H1 (cell line): ENCODE measurements at regions of chr1 and their contacts with region 1.

Region 1: DNA sequence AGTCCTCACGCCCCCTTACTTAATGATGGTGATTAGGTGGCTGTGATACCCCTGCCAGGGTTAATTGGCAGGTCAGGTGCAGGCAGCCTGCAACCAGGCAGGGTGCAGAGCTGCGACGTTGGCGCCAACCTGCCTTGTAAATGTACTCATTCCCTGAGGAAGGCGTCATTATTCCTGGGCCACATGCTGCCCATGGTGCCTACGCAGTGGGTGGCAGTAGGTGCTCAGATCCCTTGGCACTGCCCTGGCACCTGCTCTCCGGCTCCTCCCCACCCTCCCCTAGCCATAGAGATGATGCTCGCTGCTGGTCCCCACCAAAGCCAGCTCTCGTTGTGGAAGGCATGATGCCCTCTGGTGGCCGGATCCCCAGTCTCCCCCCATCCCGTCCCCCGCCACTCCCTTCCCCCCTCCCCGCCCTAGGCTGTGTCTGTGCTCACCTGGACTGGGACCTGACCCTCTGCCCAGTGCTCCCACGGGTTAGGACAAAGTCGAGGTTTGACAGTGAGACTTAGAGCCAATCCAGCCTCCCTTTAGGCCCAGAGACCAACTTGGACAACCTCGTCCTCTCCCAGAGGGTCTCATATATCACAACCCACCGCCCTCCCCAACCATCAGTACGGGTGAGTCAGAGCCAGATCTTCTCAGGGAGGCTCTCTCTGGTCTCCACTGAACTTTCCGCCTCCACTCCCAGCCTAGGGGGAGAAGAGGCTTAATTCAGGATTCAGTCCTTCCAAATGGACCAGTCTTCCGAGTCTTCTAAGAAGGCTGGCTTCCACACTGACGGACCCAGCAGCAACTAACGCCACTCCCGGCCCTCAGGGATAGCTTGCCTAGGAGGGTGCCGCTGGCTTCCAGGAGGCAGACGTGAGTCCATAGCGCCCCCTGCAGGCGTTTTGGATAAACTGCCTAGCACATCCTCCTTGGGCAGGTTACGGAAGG is 5.7 kb downstream of the KRTCAP2 start:
- DNase-seq: peak in 1 of 2 experiments; percentile 96
- H3K4me3 ChIP-seq: peak overlapping the region; percentile 30 to 75 (median 72); a peak in 7 of 8 replicates
- H3K27ac ChIP-seq: no peak overlapping the region
- H3K4me1 ChIP-seq: peaks cover 5 to 19% (median 13%) of the 10 kb centered on the region in 4 experiments
- H3K27me3 ChIP-seq: no peaks in the 10 kb centered on the region
- CTCF ChIP-seq: peak in 2 of 3 experiments; percentile 98 to 99; a peak in 3 of 4 replicates
- EP300 ChIP-seq: no peak
- POLR2A ChIP-seq: no peak
- RAD21 ChIP-seq: peak; percentile 96 to 98

Region 2: DNA sequence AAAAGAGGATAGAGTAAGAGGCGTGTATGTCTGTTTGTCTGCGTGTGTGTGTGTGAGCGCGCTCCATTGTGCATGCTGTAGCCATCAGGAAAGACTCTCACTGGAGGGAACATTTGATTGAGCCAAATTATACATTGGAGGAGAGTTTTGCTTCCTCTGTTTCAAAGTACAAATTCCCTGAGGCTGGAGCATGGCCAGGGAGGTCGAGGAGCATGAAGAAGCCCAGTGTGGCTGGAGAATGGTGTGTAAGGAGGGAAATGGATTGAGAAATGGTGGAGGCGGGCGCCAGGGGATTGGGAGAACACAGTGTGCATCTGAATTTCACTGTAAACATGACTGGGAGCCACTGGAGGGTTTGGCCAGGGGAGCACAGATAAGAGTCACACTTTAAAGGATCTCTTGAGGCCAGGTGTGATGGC is 61.8 kb before region 1 on chr1:
- CTCF ChIA-PET with region 1: interaction called, 101 read pairs
- POLR2A ChIA-PET with region 1: no interaction called
- DNase-seq: no peak
- H3K4me3 ChIP-seq: no peak overlapping the region
- H3K27ac ChIP-seq: no peak overlapping the region
- H3K4me1 ChIP-seq: no peaks in the 10 kb centered on the region
- H3K27me3 ChIP-seq: no peaks in the 10 kb centered on the region
- CTCF ChIP-seq: no peak
- EP300 ChIP-seq: no peak
- POLR2A ChIP-seq: no peak
- RAD21 ChIP-seq: no peak

Region 3: GRCh38 chr1:155117617-155118016 is 49.8 kb before region 1 on chr1:
- CTCF ChIA-PET with region 1: interaction called, 66 read pairs
- POLR2A ChIA-PET with region 1: interaction called, 3 read pairs
- DNase-seq: no peak
- H3K4me3 ChIP-seq: no peak overlapping the region
- H3K27ac ChIP-seq: no peak overlapping the region
- H3K4me1 ChIP-seq: no peaks in the 10 kb centered on the region
- H3K27me3 ChIP-seq: peaks cover 0 to 3% (median 0%) of the 10 kb centered on the region in 4 experiments; a peak in 1 of 7 replicates
- CTCF ChIP-seq: no peak
- EP300 ChIP-seq: no peak
- POLR2A ChIP-seq: no peak
- RAD21 ChIP-seq: no peak

Region 4: GRCh38 chr1:155127105-155127964 is 40.1 kb before region 1 on chr1 and contains the start of gene EFNA1:
- CTCF ChIA-PET with region 1: interaction called, 187 read pairs
- POLR2A ChIA-PET with region 1: interaction called, 24 read pairs
- DNase-seq: peak in 1 of 2 experiments; percentile 63
- H3K4me3 ChIP-seq: peak within 1 kb of the TSS; percentile 45 to 71 (median 64)
- H3K27ac ChIP-seq: no peak within 1 kb of the TSS
- H3K4me1 ChIP-seq: peaks cover 16 to 58% (median 40%) of the 10 kb centered on the region in 4 experiments
- H3K27me3 ChIP-seq: peaks cover 33 to 50% (median 45%) of the 10 kb centered on the region in 4 experiments
- CTCF ChIP-seq: no peak
- EP300 ChIP-seq: no peak
- POLR2A ChIP-seq: no peak
- RAD21 ChIP-seq: no peak
- total RNA-seq, gene EFNA1: 4.0 and 4.9 TPM in 2 replicates

Region 5: DNA sequence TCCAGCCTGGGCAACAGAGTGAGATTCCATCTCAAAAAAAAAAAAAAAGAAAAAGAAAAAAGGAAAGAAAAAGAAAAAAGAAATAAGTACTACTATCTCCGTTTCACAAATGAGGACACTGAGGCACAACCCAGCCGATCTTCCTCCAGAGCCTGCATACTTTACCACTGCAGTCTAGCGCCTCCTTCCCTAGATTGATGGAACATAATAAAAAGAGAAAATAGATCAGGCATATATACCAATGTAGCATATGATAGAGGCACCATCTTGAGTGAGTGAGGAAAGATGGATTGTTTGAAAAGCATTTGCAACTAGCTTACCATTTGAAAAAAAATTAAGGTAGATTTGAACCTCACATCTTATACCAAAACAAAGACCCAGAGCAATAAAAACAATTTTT is 21.9 kb before region 1 on chr1:
- CTCF ChIA-PET with region 1: interaction called, 187 read pairs
- POLR2A ChIA-PET with region 1: interaction called, 8 read pairs
- DNase-seq: no peak
- H3K4me3 ChIP-seq: no peak overlapping the region
- H3K27ac ChIP-seq: no peak overlapping the region
- H3K4me1 ChIP-seq: no peaks in the 10 kb centered on the region
- H3K27me3 ChIP-seq: peaks cover 0 to 3% (median 0%) of the 10 kb centered on the region in 4 experiments; a peak in 2 of 7 replicates
- CTCF ChIP-seq: peak in 2 of 3 experiments; percentile 24 to 30; a peak in 2 of 4 replicates
- EP300 ChIP-seq: no peak
- POLR2A ChIP-seq: no peak
- RAD21 ChIP-seq: peak in 1 of 2 experiments; percentile 22; a peak in 2 of 4 replicates

Region 6: DNA sequence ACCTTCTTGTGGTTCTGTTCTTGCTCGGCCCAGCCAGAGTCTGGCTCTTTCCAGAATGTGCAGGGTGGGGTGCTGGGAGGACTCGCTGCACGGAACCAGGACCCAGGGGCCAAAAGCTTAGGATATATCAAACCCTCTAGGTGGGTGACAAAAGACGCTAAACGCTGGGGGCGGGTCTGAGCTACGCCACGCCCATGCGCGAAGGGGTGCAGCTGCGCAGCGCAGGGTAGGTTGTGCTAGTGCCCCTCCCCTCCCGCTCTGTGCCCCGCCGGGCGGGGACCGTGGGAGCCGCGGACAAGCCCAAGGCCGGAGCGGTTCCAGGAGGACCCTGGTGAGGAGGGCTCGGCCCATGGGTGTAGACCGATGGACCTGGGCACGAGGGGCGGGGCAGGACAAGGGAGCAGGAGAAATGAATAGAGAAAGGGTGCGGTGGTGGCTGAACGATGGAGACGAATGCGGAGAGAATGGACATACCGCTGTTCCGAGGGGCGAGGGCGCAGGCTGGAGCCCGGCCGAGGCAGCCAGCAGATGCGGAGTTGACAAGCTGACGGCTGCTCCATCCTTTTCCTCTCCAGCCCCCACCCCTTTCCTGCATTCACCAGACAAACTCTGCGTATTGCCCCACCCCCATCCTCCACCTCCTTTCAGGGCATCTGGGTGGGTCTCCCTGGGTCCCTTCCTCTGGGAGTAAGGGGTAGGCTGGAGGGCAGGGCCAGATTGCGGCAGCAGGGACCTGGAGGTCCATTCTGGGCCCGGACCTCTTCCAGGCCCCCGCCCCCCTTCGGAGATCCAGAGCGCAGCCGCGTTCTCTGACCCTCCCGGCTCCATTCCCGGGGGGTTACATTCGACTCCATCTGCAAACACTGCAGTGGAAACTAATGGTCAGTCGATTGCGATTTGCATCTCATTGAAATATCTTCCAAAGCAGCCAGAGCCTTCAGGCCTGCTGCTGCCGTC is 153.5 kb after region 1 on chr1 and contains the start of gene RUSC1:
- CTCF ChIA-PET with region 1: no interaction called
- POLR2A ChIA-PET with region 1: no interaction called
- DNase-seq: peak; percentile 44 to 95
- H3K4me3 ChIP-seq: peak within 1 kb of the TSS; percentile 42 to 94 (median 76)
- H3K27ac ChIP-seq: no peak within 1 kb of the TSS
- H3K4me1 ChIP-seq: peaks cover 8 to 26% (median 14%) of the 10 kb centered on the region in 4 experiments; a peak in 6 of 7 replicates
- H3K27me3 ChIP-seq: peaks cover 0 to 5% (median 3%) of the 10 kb centered on the region in 4 experiments; a peak in 4 of 7 replicates
- CTCF ChIP-seq: peak in 1 of 3 experiments; percentile 8; a peak in 1 of 4 replicates
- EP300 ChIP-seq: no peak
- POLR2A ChIP-seq: peak in 1 of 2 experiments; percentile 54; a peak in 1 of 3 replicates
- RAD21 ChIP-seq: no peak
- total RNA-seq, gene RUSC1: 54.6 and 59.8 TPM in 2 replicates